ENCODE measurements at regions of chr1 and their contacts with region 1.

Region 1: GRCh38 chr1:154404984-154405761 is at the start of gene IL6R:
- DNase-seq: peak; percentile 40 to 86 (median 76)
- ATAC-seq: peak; percentile 71
- H3K4me3 ChIP-seq: peak within 1 kb of the TSS; percentile 48 to 58
- H3K4me3 Mint-ChIP-seq: peak within 1 kb of the TSS; percentile 88
- H3K27ac ChIP-seq: peak within 1 kb of the TSS; percentile 35 to 57
- H3K27ac Mint-ChIP-seq: peak within 1 kb of the TSS; percentile 93
- H3K4me1 ChIP-seq: peaks cover 64% of the 10 kb centered on the region
- H3K4me1 Mint-ChIP-seq: peaks cover 84% of the 10 kb centered on the region
- H3K27me3 ChIP-seq: no peaks in the 10 kb centered on the region
- H3K27me3 Mint-ChIP-seq: no peaks in the 10 kb centered on the region
- CTCF ChIP-seq: peak; percentile 33
- total RNA-seq, gene IL6R: 10.0 to 12.0 TPM

Region 2: GRCh38 chr1:154344977-154345837 is 60.0 kb before region 1 on chr1:
- CTCF ChIA-PET with region 1: interaction called, 25 read pairs
- POLR2A ChIA-PET with region 1: interaction called, 3 read pairs
- intact Hi-C with region 1: loop called in 1 of 2 experiments (anchors 2 kb)
- DNase-seq: peak; percentile 59 to 88 (median 81)
- ATAC-seq: peak; percentile 48
- H3K4me3 ChIP-seq: peak overlapping the region; percentile 58 to 66
- H3K4me3 Mint-ChIP-seq: peak overlapping the region; percentile 87
- H3K27ac ChIP-seq: peak overlapping the region; percentile 8 to 77
- H3K27ac Mint-ChIP-seq: peak overlapping the region; percentile 81
- H3K4me1 ChIP-seq: peaks cover 70% of the 10 kb centered on the region
- H3K4me1 Mint-ChIP-seq: peaks cover 80% of the 10 kb centered on the region
- H3K27me3 ChIP-seq: no peaks in the 10 kb centered on the region
- H3K27me3 Mint-ChIP-seq: no peaks in the 10 kb centered on the region
- CTCF ChIP-seq: peak; percentile 66

Region 3: DNA sequence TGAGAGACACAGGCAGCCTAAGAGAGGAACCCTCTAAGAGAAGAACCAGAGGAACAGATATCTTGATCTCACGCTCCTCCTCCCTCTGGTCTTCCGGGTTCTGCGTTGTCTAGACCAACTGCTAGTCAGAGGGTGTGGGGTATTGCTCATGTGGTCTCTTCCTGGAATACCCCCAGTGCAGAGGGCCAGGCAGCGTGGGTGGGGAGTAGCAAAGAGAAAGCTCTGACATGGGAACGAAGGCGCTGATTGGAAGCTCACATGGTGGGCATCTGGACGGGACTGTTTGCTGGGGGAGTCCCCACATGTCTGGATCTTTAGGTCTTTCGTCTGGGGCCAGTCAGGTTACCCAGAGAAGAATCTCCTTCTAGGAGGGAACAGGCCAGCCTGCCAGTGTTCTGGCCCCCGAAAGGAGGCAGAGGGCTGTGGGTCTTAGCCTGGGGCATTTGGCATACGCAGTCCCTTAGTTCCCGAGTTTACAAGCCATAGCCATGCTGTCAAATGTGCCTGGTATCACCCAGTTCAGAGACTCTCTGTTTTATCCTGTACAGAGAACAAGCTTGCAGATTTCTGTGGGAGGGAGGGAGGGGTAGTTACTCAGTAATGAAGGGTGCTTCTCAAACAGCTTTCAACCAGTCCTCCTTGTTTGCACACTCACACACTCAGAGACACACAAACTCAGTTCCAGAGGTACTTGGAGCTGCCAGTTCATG is 18.4 kb before region 1 on chr1:
- CTCF ChIA-PET with region 1: interaction called, 16 read pairs
- POLR2A ChIA-PET with region 1: interaction called, 13 read pairs
- intact Hi-C with region 1: loop called (anchors 2 kb)
- DNase-seq: peak; percentile 33 to 91 (median 69)
- ATAC-seq: peak; percentile 92
- H3K4me3 ChIP-seq: peak overlapping the region; percentile 18 to 23
- H3K4me3 Mint-ChIP-seq: peak overlapping the region; percentile 81
- H3K27ac ChIP-seq: peak overlapping the region; percentile 36 to 82
- H3K27ac Mint-ChIP-seq: peak overlapping the region; percentile 98
- H3K4me1 ChIP-seq: peaks cover 34% of the 10 kb centered on the region
- H3K4me1 Mint-ChIP-seq: peaks cover 45% of the 10 kb centered on the region
- H3K27me3 ChIP-seq: no peaks in the 10 kb centered on the region
- H3K27me3 Mint-ChIP-seq: no peaks in the 10 kb centered on the region
- CTCF ChIP-seq: no peak

Region 4: DNA sequence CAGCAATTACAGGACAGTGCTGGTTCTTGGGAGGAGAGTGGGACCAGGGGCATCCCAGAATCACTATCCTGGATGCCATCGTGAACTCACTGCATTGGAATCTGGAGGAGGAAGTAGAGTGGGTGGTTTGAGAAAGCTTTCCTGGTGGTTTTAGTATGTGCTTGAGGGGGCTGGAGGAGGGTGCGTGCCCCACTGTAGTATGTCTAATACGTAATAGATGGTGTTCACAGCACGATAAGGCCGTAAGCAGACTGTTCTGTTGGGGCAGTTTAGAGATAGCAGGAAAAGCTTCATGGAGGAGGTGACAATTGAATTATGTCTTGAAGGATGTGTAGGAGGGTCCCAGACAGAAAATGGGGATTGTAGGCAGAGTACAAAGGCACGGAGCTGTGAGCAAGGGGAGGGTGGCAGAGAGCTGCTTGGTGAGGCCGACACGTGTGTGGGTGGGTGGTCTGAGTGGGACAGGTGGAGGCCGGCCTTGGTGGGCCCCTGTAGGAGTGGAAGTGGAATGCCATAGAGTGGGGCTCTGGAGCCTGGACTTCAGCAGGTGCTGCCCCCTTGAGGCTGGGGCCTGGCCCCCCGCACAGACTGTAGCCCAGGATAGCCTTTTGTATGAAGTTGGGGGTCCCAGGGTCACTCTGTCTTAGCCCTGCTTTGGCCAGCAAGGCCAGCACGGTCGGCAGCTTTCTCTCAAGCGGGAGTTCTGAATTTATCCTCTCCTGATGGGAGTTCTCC is 37.0 kb after region 1 on chr1:
- CTCF ChIA-PET with region 1: interaction called, 9 read pairs
- POLR2A ChIA-PET with region 1: interaction called, 3 read pairs
- intact Hi-C with region 1: loop called (anchors 1 to 2 kb)
- DNase-seq: peak in 3 of 9 experiments; percentile 19 to 42 (median 30)
- ATAC-seq: no peak
- H3K4me3 ChIP-seq: no peak overlapping the region
- H3K4me3 Mint-ChIP-seq: peak overlapping the region; percentile 60
- H3K27ac ChIP-seq: peak overlapping the region in 1 of 2 experiments; percentile 22
- H3K27ac Mint-ChIP-seq: peak overlapping the region; percentile 89
- H3K4me1 ChIP-seq: peaks cover 58% of the 10 kb centered on the region
- H3K4me1 Mint-ChIP-seq: peaks cover 63% of the 10 kb centered on the region
- H3K27me3 ChIP-seq: no peaks in the 10 kb centered on the region
- H3K27me3 Mint-ChIP-seq: no peaks in the 10 kb centered on the region
- CTCF ChIP-seq: peak; percentile 24

Region 5: DNA sequence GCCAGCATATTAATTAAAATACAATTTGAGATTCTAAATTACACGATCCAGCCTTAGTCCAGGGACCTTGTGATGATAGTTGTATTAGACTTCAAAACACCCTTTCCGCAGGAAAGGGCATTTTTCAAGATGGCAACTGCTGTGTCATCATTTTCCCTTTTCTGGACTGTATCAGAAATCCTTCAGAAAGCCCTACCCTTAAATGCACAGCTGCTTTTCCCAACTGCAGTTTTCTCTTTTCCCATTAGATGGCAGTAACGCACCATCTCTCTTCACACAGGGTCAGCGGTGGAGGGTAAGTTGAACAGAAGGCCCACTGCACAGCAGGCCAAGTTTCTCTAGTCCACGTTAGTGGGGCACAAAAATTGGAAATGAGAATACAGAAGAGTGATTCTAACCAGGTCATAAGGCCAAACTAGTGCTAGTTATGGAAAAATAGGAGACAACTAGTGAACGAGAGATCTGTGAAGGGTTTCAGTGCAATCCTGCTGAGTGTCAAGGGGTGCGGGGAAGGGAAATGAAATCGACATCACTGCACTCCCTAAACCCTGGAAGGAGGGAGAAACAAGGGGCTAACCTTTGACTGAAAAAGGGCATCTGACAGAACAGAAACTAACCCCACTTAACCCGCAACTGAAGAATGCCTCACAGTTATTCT is 74.7 kb after region 1 on chr1:
- CTCF ChIA-PET with region 1: interaction called, 7 read pairs
- POLR2A ChIA-PET with region 1: no interaction called
- intact Hi-C with region 1: loop called in 1 of 2 experiments (anchors 1 kb)
- DNase-seq: peak in 8 of 9 experiments; percentile 12 to 80 (median 58)
- ATAC-seq: peak; percentile 91
- H3K4me3 ChIP-seq: no peak overlapping the region
- H3K4me3 Mint-ChIP-seq: no peak overlapping the region
- H3K27ac ChIP-seq: no peak overlapping the region
- H3K27ac Mint-ChIP-seq: no peak overlapping the region
- H3K4me1 ChIP-seq: peaks cover 3% of the 10 kb centered on the region
- H3K4me1 Mint-ChIP-seq: peaks cover 9% of the 10 kb centered on the region
- H3K27me3 ChIP-seq: no peaks in the 10 kb centered on the region
- H3K27me3 Mint-ChIP-seq: peaks cover 3% of the 10 kb centered on the region
- CTCF ChIP-seq: peak; percentile 98